ENCODE measurements at regions of chr3 and their contacts with region 1.

Region 1: DNA sequence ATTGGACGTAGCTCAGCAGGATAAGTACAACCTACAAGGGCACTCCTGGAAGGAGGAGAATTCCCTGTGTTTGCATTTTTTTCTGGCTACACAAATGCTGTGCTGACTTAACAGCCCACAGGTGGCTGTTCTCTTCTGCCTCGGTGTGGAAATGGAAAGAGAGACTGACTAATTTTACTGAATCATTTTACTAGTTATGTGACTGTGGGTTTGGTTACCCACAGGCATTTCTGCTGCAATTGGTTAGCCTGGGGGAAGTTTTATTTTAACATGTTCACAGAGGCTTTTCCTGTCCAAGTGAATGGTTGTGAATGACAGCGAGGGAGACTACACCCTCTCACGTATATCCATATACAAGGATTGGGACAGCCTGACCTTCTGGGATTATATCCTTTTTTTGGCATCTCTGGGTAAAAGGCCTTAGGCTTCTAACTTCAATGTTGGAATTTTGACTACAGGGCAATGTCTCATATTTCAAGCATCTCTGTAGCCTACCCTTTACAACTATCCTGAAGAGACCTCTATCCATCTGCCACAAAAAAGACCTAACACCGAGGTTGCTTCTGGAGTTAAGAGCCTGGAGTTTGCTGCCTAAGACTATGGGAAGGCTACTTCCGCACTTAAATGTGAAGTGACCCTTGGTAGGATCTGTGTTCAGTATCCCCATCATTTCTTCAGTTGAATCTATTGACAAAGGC is 67.2 kb upstream of the TP63 start:
- DNase-seq: peak; percentile 84
- H3K4me3 Mint-ChIP-seq: peak overlapping the region; percentile 3
- H3K27ac Mint-ChIP-seq: peak overlapping the region; percentile 31
- H3K4me1 Mint-ChIP-seq: peaks cover 30% of the 10 kb centered on the region
- H3K27me3 Mint-ChIP-seq: no peaks in the 10 kb centered on the region

Region 2: GRCh38 chr3:189529468-189529867 is 34.5 kb before region 1 on chr3:
- intact Hi-C with region 1: loop called (anchors 1 kb)
- DNase-seq: no peak
- H3K4me3 Mint-ChIP-seq: no peak overlapping the region
- H3K27ac Mint-ChIP-seq: peak overlapping the region; percentile 69
- H3K4me1 Mint-ChIP-seq: peaks cover 18% of the 10 kb centered on the region
- H3K27me3 Mint-ChIP-seq: no peaks in the 10 kb centered on the region

Region 3: GRCh38 chr3:189537135-189537534 is 26.9 kb before region 1 on chr3:
- intact Hi-C with region 1: loop called (anchors 1 kb)
- DNase-seq: no peak
- H3K4me3 Mint-ChIP-seq: no peak overlapping the region
- H3K27ac Mint-ChIP-seq: peak overlapping the region; percentile 65
- H3K4me1 Mint-ChIP-seq: peaks cover 8% of the 10 kb centered on the region
- H3K27me3 Mint-ChIP-seq: peaks cover 2% of the 10 kb centered on the region

Region 4: GRCh38 chr3:189588070-189588820 is 24.2 kb after region 1 on chr3:
- intact Hi-C with region 1: loop called (anchors 2 kb)
- DNase-seq: no peak
- H3K4me3 Mint-ChIP-seq: no peak overlapping the region
- H3K27ac Mint-ChIP-seq: no peak overlapping the region
- H3K4me1 Mint-ChIP-seq: peaks cover 10% of the 10 kb centered on the region
- H3K27me3 Mint-ChIP-seq: peaks cover 1% of the 10 kb centered on the region